Activated naive CD4-positive, alpha-beta T cell treated with anti-CD3 and anti-CD28 coated beads, Interleukin-2, amount 10 ng/mL, durations not matched to agents 7 days and 5 days (primary cell): ENCODE measurements at regions of chr1 and their contacts with region 1.

Region 1: GRCh38 chr1:11037740-11038182 is 9.3 kb downstream of the MASP2 start:
- DNase-seq: peak; percentile 92
- H3K4me3 Mint-ChIP-seq: no peak overlapping the region
- H3K27ac Mint-ChIP-seq: no peak overlapping the region
- H3K4me1 Mint-ChIP-seq: peaks cover 7% of the 10 kb centered on the region
- H3K27me3 Mint-ChIP-seq: peaks cover 4% of the 10 kb centered on the region

Region 2: DNA sequence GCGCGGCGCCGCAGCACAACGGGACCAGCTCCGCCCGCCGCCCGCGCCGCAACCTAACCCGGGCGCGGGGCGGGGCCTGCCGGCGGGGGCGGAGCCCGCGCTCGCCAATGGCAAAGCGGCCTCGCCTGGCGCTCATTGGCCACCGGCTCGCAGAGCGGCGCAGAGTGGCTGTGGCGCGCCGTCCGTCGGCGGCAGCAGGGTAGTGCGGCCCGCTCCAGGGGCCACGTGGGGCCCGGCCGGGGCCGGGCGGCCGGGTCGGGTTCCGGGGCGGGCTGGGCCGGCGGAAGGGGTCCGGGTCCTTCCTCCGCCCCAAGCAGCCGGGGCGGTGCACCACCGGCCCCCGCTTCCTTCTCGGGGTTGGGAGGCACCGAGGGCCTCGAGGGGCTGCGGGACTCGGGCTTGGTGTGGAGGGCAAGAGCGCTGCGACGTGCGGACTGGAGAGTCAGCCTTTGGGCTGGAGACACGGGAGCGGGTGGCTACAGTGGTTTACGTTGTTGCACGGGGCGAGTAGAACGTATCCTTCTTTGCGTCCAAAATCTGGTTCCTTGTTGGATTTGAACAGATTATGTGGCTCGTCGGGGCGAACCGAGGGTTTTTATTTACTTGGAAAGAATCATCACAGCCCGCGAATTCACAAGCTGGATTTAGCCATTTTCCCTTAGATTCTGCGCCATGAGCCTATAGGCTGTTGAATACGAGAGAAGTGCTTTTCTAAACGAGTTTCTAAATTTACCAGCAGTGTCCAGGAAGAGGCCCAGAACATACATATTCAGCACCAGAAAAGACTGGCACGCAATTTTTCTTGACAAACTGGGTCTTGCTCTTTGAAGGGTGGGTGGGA is 22.4 kb after region 1 on chr1 and contains the start of gene SRM:
- CTCF ChIA-PET with region 1: interaction called, 17 read pairs
- DNase-seq: peak; percentile 92
- H3K4me3 Mint-ChIP-seq: peak within 1 kb of the TSS; percentile 97
- H3K27ac Mint-ChIP-seq: peak within 1 kb of the TSS; percentile 92
- H3K4me1 Mint-ChIP-seq: peaks cover 37% of the 10 kb centered on the region
- H3K27me3 Mint-ChIP-seq: no peaks in the 10 kb centered on the region

Region 3: DNA sequence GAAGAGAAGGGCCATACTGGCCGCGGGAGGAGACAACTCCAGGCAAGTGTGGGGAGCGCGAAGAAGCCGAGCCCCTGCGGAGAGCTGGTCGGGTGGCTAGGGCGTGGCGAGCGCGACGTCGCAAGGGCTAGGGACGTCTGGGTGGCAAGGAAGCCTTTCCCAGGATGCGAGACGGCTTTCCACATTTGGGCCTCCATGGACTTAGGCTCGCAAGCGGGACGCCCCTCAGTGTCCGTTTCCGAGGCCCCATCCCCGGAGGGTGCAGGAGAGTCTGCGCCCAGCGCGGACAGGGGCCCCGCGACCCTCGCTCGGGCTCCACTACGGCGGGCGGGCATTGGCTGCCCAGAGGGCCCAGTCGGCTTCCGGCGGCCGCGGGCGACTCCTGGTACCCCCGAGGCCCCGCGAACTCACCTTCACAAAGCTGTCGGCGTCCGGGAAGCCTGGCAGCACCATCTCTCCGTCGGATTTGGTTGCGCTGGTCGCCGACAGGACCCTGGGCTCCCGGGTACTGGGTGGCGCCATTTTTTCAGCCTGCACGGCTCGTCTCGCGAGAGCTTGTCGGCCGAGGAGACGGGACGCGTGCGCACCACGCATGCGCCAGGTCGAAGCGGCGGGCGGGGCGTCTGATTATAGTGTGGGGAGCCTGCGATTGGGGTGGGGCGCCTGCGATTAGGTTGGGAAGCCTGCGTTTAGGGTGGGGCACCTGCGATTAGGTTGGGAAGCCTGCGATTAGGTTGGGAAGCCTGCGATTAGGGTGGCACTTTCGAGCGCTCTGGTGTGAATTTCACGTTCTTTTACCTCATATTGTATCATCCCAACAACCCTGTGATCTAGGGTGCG is 61.8 kb after region 1 on chr1 and contains the start of gene EXOSC10:
- CTCF ChIA-PET with region 1: interaction called, 10 read pairs
- DNase-seq: peak; percentile 97
- H3K4me3 Mint-ChIP-seq: peak within 1 kb of the TSS; percentile 99
- H3K27ac Mint-ChIP-seq: peak within 1 kb of the TSS; percentile 95
- H3K4me1 Mint-ChIP-seq: peaks cover 24% of the 10 kb centered on the region
- H3K27me3 Mint-ChIP-seq: no peaks in the 10 kb centered on the region

Region 4: DNA sequence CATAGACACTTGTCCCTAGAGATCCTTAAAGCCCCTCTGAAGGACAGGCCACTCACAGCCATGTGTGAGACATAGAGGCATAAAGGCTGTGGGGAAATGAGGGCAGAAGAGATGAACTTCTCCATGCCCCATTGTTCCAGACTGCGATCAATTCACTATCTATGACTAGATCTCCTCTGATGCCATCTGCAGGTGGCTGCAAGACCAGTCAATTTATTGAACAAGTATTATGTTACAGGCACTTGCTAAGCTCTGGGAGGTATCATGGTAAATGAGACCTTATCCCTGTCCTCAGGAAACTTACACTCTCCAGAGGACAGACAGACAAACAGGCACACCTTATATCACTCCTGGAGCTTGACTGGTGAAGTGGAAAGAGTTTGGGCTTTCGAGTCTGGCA is 258.1 kb after region 1 on chr1:
- CTCF ChIA-PET with region 1: interaction called, 11 read pairs
- DNase-seq: peak; percentile 31
- H3K4me3 Mint-ChIP-seq: no peak overlapping the region
- H3K27ac Mint-ChIP-seq: peak overlapping the region; percentile 68
- H3K4me1 Mint-ChIP-seq: peaks cover 78% of the 10 kb centered on the region
- H3K27me3 Mint-ChIP-seq: no peaks in the 10 kb centered on the region

Region 5: DNA sequence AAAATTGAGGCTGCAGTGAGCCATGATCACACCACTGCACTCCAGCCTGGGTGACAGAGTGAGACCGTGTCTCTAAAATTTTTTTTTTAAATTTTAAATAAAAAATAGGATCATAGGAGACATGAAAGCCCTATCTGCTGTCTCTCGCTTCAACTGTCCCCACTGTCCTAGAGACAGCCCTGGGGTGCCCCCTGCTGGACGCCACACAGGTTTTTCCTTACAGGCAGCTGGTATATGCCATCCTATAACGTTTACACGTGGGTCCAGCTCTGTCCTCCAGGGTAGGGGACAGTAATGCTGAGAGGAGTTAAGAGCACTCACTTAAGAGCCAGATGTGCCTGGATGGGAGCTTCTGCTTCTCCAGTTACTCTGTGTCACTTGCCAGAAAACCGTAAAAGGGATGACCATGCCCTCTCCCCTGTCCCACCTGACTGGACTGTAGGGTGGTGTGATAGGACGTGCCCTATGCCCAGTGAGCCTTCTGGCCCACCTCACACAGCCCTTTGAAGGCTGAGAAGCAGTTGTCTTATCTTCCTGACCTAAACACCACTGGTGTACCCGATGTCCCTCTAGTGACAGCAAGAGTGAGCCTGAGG is 608.0 kb after region 1 on chr1:
- CTCF ChIA-PET with region 1: interaction called, 101 read pairs
- DNase-seq: peak; percentile 92
- H3K4me3 Mint-ChIP-seq: no peak overlapping the region
- H3K27ac Mint-ChIP-seq: no peak overlapping the region
- H3K4me1 Mint-ChIP-seq: peaks cover 20% of the 10 kb centered on the region
- H3K27me3 Mint-ChIP-seq: peaks cover 53% of the 10 kb centered on the region